B cell (primary cell): ENCODE measurements at regions of chr1 and their contacts with region 1.

Region 1: DNA sequence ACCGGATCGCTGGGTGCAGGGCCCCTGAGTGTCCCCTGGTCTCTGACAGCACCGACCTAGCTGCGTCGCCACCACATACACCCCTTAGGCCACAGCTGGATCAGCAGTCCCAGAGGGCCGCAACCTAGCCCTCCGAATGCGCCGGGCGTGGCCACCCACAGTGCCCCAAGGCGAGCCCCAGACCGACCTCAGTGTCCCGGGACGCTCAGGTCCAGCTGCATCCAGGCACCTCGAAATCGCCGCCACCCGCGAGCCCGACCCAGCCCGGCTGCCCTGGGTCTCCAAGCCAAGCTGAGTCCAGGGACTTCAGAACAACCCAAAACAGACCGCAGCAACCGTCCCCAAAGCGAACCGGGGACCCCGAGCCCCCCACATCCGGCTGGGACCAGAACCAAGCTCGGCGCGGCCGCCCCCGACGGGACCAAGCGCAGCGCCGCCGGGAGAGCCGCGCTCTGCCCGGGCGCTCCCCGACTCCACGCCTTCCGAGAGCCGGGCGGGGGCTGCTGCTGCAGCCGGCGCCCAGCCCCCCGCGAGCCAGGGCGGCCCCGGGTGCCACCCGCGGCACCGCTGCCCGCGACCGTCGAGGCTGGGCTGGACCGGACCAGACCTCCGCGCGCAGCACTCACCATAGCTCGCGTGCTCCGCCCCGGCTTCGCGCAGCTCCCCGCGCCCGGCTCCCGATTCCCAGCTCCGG is 54.6 kb upstream of the ECE1 start:
- DNase-seq: no peak
- ATAC-seq: peak; percentile 39
- H3K4me3 ChIP-seq: peak overlapping the region; percentile 60 to 84 (median 69)
- H3K4me3 Mint-ChIP-seq: peak overlapping the region; percentile 91
- H3K27ac ChIP-seq: peak overlapping the region; percentile 35 to 43
- H3K27ac Mint-ChIP-seq: peak overlapping the region; percentile 85
- H3K4me1 ChIP-seq: peaks cover 38 to 45% of the 10 kb centered on the region in 2 donors
- H3K4me1 Mint-ChIP-seq: peaks cover 39% of the 10 kb centered on the region
- H3K27me3 ChIP-seq: peaks cover 0 to 4% (median 0%) of the 10 kb centered on the region in 4 experiments
- H3K27me3 Mint-ChIP-seq: no peaks in the 10 kb centered on the region
- CTCF ChIP-seq: no peak

Region 2: DNA sequence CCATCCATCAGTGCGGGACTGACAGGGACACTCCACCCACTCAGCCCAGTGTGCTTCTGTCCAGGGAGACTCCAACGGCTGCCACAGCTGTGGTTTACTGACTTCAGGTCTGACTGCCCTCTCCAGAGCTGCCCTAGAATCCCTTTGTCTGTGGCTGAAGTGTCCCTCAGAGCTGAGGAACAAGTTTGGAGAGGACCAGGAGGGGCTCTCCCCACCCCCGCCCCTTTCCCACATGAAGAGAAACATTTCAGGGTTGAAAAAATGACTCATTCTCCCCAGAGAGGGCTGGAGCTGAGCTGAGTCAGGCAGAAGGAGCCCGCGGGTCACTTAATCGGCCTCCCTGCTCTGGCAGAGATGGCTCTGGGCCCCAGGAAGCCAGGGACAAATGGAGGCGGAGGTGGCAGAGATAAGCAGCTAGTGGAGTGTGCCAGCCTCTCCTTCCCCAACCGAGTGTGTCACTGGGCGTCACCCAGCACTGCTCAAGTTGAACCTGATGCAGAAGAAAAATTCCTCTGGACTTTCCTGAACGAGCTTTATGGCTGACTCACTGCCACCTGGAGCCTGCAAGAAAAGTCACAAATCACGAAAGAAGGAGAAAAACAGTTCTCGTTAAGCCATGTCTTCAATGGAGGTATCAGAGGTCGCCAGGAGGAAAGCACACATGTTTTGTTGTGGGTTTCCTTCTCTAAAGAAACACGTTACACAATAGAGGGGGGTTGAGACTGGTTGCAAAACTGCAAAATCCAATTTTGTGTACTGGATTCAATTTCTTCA is 20.3 kb before region 1 on chr1:
- CTCF ChIA-PET with region 1: interaction called, 11 read pairs
- POLR2A ChIA-PET with region 1: interaction called, 12 read pairs
- intact Hi-C with region 1: loop called (anchors 2 kb)
- DNase-seq: peak; percentile 65
- ATAC-seq: peak; percentile 67
- H3K4me3 ChIP-seq: peak overlapping the region in 4 of 5 experiments; percentile 4 to 16 (median 14)
- H3K4me3 Mint-ChIP-seq: peak overlapping the region; percentile 81
- H3K27ac ChIP-seq: peak overlapping the region; percentile 63 to 64
- H3K27ac Mint-ChIP-seq: peak overlapping the region; percentile 93
- H3K4me1 ChIP-seq: peaks cover 50 to 56% of the 10 kb centered on the region in 2 donors
- H3K4me1 Mint-ChIP-seq: peaks cover 71% of the 10 kb centered on the region
- H3K27me3 ChIP-seq: no peaks in the 10 kb centered on the region
- H3K27me3 Mint-ChIP-seq: no peaks in the 10 kb centered on the region
- CTCF ChIP-seq: no peak

Region 3: DNA sequence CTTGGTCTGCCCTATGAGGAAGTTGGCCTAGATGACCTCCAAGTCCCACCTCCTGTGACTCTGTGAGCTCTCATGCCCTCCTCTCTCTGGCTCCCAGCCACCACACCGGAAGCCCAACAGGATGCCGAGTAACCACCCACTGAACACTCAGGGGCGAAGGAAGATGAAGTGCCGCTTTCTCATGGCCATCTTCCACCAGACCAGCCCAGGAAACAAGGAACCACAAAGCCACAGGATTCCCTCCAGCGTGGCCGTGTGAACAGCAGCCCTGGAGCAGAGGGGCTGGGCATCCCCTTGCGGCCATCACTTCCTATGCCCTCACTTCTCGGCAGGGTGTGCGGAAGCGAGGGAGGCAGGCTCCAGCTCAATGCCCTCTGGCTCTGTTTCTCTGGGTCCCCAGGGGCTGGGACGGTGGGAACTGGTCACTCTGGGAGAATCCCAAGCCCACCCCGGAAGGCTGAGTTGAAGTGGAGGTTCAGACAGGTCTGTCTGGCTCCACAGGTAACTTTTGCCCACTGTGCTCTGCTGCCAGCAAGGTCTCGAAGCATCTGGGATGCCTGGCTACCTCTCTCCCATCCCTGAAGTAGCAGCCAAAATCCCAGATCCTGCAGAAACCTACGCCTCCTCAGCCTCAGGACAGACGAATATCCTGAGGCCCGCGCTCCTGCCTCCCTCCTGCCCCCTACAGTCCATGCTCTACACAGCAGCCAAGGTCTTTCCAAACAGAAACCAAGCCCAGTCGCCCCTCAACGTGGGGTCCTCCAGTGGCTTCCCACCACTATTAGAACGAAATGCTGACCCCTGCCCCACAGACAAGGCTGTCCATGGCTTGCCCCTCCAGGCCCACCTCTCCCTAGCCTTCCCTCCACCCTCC is 10.4 kb before region 1 on chr1:
- CTCF ChIA-PET with region 1: interaction called, 13 read pairs
- POLR2A ChIA-PET with region 1: interaction called, 11 read pairs
- intact Hi-C with region 1: loop called (anchors 1 kb)
- DNase-seq: peak; percentile 93
- ATAC-seq: peak; percentile 86
- H3K4me3 ChIP-seq: peak overlapping the region in 4 of 5 experiments; percentile 49 to 69 (median 56)
- H3K4me3 Mint-ChIP-seq: peak overlapping the region; percentile 87
- H3K27ac ChIP-seq: peak overlapping the region; percentile 90 to 95
- H3K27ac Mint-ChIP-seq: peak overlapping the region; percentile 98
- H3K4me1 ChIP-seq: peaks cover 54 to 73% of the 10 kb centered on the region in 2 donors
- H3K4me1 Mint-ChIP-seq: peaks cover 83% of the 10 kb centered on the region
- H3K27me3 ChIP-seq: no peaks in the 10 kb centered on the region
- H3K27me3 Mint-ChIP-seq: no peaks in the 10 kb centered on the region
- CTCF ChIP-seq: peak; percentile 72

Region 4: DNA sequence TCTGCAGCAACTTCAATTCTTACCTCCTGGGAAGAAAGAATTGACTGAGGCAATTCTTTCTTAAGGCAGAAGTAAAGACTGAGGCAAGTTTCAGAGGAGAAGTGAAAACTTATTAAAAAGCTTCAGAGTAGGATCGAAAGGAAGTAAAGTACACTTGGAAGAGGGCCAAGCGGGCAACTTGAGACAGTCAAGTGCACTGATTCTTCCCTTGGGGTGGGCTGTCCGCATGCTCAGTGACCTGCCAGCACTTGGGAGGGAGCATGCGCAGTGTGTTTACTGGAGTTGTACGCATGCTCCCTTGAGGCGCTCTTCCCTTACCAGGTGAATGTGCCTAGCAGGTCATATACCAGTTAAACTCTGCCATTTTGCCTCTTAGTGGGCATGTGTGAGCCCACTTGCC is 39.7 kb after region 1 on chr1:
- CTCF ChIA-PET with region 1: no interaction called
- POLR2A ChIA-PET with region 1: no interaction called
- intact Hi-C with region 1: no loop called
- DNase-seq: peak; percentile 28
- ATAC-seq: no peak
- H3K4me3 ChIP-seq: no peak overlapping the region
- H3K4me3 Mint-ChIP-seq: peak overlapping the region; percentile 29
- H3K27ac ChIP-seq: no peak overlapping the region
- H3K27ac Mint-ChIP-seq: no peak overlapping the region
- H3K4me1 ChIP-seq: peaks cover 11 to 12% of the 10 kb centered on the region in 2 donors
- H3K4me1 Mint-ChIP-seq: peaks cover 15% of the 10 kb centered on the region
- H3K27me3 ChIP-seq: peaks cover 0 to 22% (median 11%) of the 10 kb centered on the region in 4 experiments
- H3K27me3 Mint-ChIP-seq: peaks cover 31% of the 10 kb centered on the region
- CTCF ChIP-seq: no peak